ENCODE measurements at regions of chr5 and their contacts with region 1.

Region 1: DNA sequence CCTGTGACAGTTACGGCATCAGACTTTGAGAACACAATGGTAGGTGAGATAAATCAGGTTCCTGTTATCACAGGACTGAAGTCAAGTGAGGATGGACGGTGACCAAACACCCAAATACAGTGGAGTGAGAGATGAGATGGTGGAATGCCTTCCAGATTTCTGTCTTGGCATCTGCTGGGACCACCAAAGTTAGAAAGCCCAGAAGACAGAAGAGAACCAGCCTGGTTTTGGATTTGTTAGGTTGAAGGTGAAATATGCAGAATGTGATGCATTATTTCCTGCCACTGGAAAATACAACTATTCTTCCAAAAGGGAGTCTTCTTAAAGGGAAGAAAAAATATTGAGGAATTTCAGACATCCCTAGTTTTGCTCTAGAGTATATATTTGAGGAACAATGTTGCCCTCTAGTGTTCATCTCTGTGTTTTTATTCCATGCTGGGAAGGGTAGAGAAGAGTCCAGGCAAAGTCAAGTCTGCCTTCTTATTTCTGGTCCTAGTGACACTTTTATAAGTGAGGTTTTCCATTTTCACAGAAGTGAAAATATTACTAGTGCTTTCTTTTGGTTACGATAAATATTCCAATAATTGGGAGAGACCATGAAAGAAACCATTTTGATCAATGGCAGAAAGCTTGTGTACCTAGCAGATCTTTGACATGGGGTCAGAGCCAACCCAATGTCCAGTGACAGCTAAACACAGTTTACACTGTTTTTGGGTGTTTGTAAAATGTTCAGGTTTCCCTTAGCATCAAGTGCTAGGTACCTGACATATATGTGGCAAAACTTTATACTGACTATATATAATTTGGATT is 142.3 kb upstream of the ANKH start:
- DNase-seq: no peak
- ATAC-seq: peak; percentile 82 to 87
- H3K4me3 ChIP-seq: no peak overlapping the region
- H3K27ac ChIP-seq: no peak overlapping the region
- H3K4me1 ChIP-seq: peaks cover 2% of the 10 kb centered on the region
- H3K27me3 ChIP-seq: no peaks in the 10 kb centered on the region

Region 2: DNA sequence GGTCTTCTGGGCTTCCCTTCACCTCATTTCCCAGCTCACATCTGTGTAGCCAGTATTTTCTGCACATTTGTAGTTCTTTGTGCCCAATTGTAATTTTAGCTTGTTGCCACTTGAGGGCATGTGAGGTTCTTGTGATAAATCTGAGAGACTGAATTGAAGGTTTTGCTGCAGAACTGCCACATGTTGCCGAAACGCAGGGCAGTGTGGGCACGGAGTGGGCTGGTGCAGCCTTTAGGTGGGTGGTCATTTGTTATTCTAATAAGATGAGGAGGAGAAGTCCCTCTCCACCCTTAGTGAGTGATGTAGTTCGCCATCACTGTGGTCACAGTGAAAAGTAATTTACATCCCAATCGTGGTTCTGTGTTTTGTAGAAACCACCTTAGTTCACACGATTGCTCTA is 328.1 kb before region 1 on chr5:
- intact Hi-C with region 1: loop called in 2 of 4 experiments (anchors 10 kb)
- DNase-seq: peak in 1 of 3 donors; percentile 43
- ATAC-seq: peak in 1 of 2 donors; percentile 54
- H3K4me3 ChIP-seq: no peak overlapping the region
- H3K27ac ChIP-seq: peak overlapping the region; percentile 57
- H3K4me1 ChIP-seq: no peaks in the 10 kb centered on the region
- H3K27me3 ChIP-seq: no peaks in the 10 kb centered on the region

Region 3: GRCh38 chr5:14727428-14727865 is 286.4 kb before region 1 on chr5:
- intact Hi-C with region 1: loop called in 2 of 4 experiments (anchors 5 kb)
- DNase-seq: peak; percentile 76 to 89 (median 88)
- ATAC-seq: peak; percentile 74 to 80
- H3K4me3 ChIP-seq: no peak overlapping the region
- H3K27ac ChIP-seq: no peak overlapping the region
- H3K4me1 ChIP-seq: peaks cover 2% of the 10 kb centered on the region
- H3K27me3 ChIP-seq: no peaks in the 10 kb centered on the region

Region 4: GRCh38 chr5:15132434-15133405 is 118.9 kb after region 1 on chr5:
- intact Hi-C with region 1: no loop called
- DNase-seq: peak in 2 of 3 donors; percentile 13 to 46
- ATAC-seq: peak; percentile 52 to 54
- H3K4me3 ChIP-seq: no peak overlapping the region
- H3K27ac ChIP-seq: no peak overlapping the region
- H3K4me1 ChIP-seq: no peaks in the 10 kb centered on the region
- H3K27me3 ChIP-seq: no peaks in the 10 kb centered on the region

Region 5: DNA sequence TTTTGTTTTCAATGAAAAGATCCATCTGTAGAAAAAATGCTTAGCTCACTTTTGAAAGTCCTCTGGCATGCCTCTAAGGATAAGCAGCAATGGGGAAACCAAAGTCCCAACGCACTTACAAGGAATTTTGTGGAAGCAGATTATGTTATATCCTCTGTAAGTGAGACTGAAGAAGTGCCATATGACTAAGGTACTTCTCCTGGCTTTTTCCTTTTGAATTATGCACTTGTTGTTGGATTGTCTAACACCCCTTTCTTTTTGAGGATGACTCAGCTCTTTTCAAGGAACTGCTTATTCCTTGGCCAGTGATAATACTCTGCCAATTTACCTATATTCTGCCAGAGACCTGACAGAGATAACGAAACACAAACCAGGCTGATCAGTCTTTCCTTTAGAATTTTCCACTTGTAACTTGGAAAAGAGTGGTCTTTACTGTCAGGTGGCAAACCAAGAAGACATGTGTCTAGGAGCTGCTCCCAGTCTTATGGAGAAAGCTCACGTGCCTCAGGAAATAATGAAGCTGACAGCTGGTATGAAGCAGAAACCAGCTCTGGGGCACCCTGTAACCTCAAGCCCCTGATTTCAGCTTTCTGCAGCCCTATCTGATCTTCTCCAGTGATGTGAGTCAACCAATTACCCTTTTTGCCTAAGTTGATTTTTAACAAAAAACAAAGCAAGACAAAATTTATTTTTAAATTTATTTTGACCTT is 195.3 kb after region 1 on chr5:
- intact Hi-C with region 1: no loop called
- DNase-seq: no peak
- ATAC-seq: peak in 1 of 2 donors; percentile 32
- H3K4me3 ChIP-seq: no peak overlapping the region
- H3K27ac ChIP-seq: no peak overlapping the region
- H3K4me1 ChIP-seq: no peaks in the 10 kb centered on the region
- H3K27me3 ChIP-seq: no peaks in the 10 kb centered on the region

Measured in right cardiac atrium (tissue), 5 donors.